ENCODE measurements at regions of chr2 and their contacts with region 1.

Region 1: DNA sequence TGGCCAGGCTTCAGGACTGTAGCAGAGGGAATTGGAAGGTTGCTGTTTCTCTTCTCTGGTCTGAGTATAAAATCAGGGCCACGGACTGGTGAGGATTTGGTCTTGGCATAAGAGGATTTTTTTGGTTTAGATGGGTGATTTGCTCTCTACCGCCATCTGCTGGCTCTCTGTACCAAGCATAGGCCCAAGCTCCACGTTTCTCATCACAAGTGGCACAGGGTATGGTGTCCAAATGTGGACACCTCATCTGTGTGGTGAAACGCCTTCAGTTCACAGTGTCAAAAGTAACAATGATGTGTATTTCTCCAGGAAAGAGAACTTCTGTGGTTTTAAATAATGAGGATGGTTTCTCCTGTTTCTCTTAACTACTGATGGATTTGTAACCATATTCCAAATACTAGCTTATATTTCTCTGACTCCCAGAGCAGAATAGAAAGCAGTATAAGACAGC is 115.1 kb downstream of the EML6 start:
- DNase-seq: peak; percentile 30 to 78
- ATAC-seq: peak; percentile 73

Region 2: DNA sequence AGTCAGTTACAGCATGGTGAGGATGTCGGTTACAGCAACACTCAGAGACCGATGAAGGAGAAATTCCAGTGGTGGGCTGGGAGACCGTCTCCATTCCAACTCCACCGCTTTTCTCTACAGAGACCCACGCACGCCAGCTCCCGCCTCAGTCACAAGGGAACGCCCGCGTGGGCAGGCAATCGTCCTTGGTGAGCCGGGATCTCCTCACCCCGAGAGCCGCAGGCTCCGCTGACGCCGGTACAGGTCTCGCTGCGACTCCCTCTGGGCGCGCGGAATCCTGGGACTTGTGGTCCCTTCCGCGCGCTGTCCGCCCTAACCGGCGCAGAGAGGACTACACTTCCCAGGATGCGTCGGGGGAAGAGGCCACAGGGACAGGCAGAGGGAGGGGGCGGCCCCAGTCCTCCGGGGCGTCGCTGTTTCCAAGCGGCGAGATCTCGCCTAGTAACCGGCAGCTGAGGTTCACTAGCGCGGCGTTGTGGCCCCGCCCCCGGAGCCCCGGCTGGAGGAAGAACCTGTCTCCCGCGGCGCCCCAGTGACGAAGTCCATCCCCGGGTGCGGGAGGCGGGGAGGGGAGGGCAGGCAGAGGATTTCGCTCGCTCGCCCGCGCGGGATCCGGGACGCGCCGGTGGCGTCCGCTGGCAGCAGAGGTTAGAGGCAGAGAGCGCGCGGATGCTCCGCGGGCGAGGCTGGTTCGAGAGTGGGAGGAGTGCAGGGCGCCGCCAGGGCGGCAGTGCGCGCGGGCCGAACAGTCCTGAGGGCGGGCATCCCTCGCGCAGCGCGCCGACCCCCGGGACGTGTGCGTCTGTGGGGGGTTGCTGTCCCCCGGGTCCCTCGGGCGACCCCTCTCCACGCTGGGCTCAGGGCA is 115.2 kb before region 1 on chr2 and contains the start of gene EML6:
- intact Hi-C with region 1: loop called in 1 of 2 experiments (anchors 10 kb)
- DNase-seq: peak; percentile 99
- ATAC-seq: peak; percentile 98
- total RNA-seq, gene EML6: 3.2 to 6.8 TPM

Region 3: GRCh38 chr2:54735636-54736035 is 103.0 kb before region 1 on chr2:
- intact Hi-C with region 1: no loop called
- DNase-seq: no peak
- ATAC-seq: no peak